ENCODE measurements at regions of chr1 and their contacts with region 1.

Region 1: GRCh38 chr1:26363549-26364448 is 8.8 kb downstream of the ZNF683 start:
- DNase-seq: peak; percentile 87

Region 2: DNA sequence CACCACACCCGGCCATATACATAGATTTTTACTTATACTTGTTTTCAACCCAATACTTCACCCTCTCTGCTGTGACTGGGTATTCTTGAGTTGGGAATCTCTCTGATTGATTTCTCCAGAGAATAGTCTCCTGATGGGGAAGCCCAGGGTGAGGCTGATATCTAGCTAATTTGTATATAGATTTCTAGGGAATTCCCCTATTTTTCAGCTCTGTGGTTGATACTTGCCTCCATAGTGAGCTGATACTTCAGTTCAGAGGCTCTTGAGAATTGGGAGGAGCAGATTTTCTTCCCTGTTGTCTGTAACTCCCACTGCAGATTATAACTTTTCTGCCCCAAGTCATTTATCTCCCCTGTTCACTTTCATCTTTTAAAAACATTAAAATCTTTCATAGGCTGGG is 98.4 kb before region 1 on chr1:
- intact Hi-C with region 1: no loop called
- DNase-seq: no peak

Region 3: GRCh38 chr1:26284597-26285360 is 79.0 kb before region 1 on chr1:
- intact Hi-C with region 1: loop called (anchors 5 kb)
- DNase-seq: peak; percentile 87

Region 4: DNA sequence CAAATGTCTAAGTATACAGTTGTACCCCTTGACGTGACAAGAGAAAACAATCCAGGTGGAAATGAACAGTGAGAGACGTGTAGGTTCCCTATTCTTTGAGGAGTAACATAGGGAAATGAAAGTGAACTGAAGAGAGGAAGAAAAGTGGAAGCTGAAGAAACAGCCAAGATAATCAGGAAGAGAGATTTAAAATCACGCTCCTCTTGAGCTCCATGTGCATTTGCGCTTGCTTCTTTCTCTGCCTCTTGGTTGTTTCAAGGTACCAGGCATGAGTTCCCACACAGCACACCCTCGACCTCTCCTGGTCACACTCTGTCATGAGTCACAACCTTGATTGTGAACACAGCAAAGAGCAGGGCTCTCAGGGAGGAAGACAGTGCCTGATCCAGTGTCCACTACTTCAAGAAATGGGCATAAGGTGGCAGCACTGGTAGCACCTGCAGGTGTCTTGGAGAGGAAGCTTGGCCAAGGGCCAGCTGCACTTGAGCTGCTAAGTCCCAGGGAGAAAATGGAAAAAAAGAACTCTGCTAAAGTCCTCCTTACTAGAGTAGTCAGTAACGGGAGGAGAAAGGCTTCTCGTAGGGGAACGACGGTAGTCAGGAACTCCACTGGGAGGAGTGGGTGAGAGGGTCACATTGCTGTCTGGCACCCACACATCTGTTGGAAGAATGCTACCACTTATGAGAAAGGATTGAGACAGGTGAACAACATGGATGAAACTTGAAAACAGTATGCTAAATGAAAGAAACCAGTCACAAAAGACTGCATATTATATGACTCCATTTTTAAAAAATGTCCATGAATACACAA is 313.7 kb after region 1 on chr1:
- intact Hi-C with region 1: no loop called
- DNase-seq: peak; percentile 88